ENCODE measurements at regions of chr15 and their contacts with region 1.

Region 1: DNA sequence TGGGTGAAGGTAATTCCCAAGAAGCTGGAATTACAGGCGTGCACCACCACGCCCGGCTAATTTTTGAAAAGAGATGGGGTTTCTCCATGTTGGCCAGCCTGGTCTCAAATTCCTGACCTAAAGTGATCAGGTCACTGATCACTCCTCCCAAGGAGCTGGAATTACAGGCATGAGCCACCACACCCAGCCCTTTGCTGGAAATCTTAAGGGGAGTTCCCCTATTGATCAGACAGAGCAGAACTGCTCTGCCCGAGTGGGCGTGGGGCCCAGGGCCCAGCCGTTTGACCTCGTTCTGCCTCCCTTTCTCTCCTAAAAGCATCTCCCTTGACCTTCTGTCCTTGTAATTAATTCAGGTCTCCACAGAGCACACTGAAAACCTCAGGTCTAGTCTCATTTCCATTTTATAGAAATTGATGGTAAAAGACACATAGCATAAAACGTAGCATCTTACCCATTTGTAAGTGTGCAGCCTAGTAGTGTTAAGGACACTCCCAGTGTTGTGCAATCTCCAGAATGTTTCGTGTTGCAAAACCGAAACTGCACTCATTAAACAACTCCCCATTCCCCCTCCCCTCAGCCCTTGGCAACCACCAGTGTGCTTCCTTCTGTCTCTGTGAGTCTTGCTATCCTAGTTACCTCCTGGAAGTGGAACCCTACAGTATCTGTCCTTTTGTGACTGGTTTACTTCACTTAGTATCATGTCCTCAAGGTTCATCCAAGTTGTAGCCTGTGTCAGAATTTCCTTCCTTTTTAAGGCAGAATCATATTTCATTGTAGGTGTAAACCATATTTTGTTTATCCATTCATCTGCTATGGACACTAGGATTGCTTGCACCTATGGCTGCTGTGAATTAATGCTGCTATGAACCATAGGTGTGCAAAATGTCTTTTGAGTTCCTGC is 89.4 kb downstream of the SLCO3A1 start:
- H3K4me3 Mint-ChIP-seq: peak overlapping the region; percentile 69
- H3K27ac Mint-ChIP-seq: peak overlapping the region; percentile 92
- H3K4me1 Mint-ChIP-seq: peaks cover 97% of the 10 kb centered on the region
- H3K27me3 Mint-ChIP-seq: no peaks in the 10 kb centered on the region

Region 2: GRCh38 chr15:91921188-91921842 is 21.6 kb before region 1 on chr15:
- intact Hi-C with region 1: loop called (anchors 2 kb)
- H3K4me3 Mint-ChIP-seq: peak overlapping the region; percentile 57
- H3K27ac Mint-ChIP-seq: peak overlapping the region; percentile 94
- H3K4me1 Mint-ChIP-seq: peaks cover 79% of the 10 kb centered on the region
- H3K27me3 Mint-ChIP-seq: no peaks in the 10 kb centered on the region